Panc1 (cell line): ENCODE measurements at regions of chr17 and their contacts with region 1.

Region 1: DNA sequence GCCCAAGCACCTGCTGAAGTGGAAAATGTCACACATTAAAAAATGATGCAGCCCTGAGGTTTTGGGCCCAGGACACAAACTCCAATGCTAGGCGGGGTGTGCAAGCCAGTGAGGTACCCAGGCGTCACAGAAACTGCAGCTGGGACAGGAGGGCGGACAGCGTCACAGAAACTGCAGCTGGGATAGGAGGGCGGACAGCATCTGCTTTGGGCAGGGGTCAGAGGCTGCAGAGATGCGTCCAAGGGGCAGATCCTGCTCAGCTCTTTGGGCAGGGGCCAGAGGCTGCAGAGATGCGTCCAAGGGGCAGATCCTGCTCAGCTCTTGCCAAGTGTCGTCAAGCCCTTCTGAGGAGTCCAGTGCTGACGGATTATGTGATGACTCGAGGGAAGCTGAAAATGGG is 43.9 kb upstream of the RCVRN start:
- DNase-seq: no peak
- ATAC-seq: no peak
- H3K4me3 ChIP-seq: no peak overlapping the region
- H3K27ac ChIP-seq: no peak overlapping the region
- H3K4me1 ChIP-seq: no peaks in the 10 kb centered on the region
- H3K27me3 ChIP-seq: peaks cover 3% of the 10 kb centered on the region; the same call in 1 of the 2 replicates
- CTCF ChIP-seq: no peak

Region 2: GRCh38 chr17:9890124-9890523 is 58.8 kb before region 1 on chr17:
- CTCF ChIA-PET with region 1: no interaction called
- POLR2A ChIA-PET with region 1: no interaction called
- in situ Hi-C with region 1: no loop called
- intact Hi-C with region 1: no loop called
- DNase-seq: no peak
- ATAC-seq: no peak
- H3K4me3 ChIP-seq: no peak overlapping the region
- H3K27ac ChIP-seq: no peak overlapping the region
- H3K4me1 ChIP-seq: no peaks in the 10 kb centered on the region
- H3K27me3 ChIP-seq: no peaks in the 10 kb centered on the region; the same call in 1 of the 2 replicates
- CTCF ChIP-seq: peak; percentile 71

Region 3: GRCh38 chr17:9907883-9908581 is 40.9 kb before region 1 on chr17:
- CTCF ChIA-PET with region 1: no interaction called
- POLR2A ChIA-PET with region 1: no interaction called
- in situ Hi-C with region 1: no loop called
- intact Hi-C with region 1: no loop called
- DNase-seq: no peak
- ATAC-seq: no peak
- H3K4me3 ChIP-seq: no peak overlapping the region
- H3K27ac ChIP-seq: no peak overlapping the region
- H3K4me1 ChIP-seq: no peaks in the 10 kb centered on the region
- H3K27me3 ChIP-seq: no peaks in the 10 kb centered on the region; the same call in 1 of the 2 replicates
- CTCF ChIP-seq: no peak

Region 4: DNA sequence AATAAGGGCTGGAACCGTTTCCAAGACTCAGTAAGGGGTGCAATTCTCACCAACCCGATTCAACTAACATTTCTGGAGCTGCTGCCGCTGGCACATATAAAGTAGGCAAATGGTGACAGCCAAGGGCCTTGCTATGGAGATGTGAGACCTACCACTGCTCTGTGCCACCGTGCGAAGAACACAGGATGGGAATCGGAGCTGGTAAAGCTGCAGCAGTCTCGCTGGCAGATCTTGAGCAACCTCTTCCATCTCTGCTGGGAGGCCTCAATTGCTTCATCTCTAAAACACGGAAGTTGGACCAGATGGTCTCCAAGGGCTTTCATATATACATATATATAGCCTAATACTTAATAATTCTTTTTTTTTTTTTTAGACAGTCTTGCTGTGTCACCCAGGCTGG is 85.0 kb after region 1 on chr17:
- CTCF ChIA-PET with region 1: no interaction called
- POLR2A ChIA-PET with region 1: no interaction called
- in situ Hi-C with region 1: no loop called
- intact Hi-C with region 1: no loop called
- DNase-seq: no peak
- ATAC-seq: no peak
- H3K4me3 ChIP-seq: no peak overlapping the region
- H3K27ac ChIP-seq: no peak overlapping the region
- H3K4me1 ChIP-seq: no peaks in the 10 kb centered on the region
- H3K27me3 ChIP-seq: no peaks in the 10 kb centered on the region
- CTCF ChIP-seq: no peak

Region 5: DNA sequence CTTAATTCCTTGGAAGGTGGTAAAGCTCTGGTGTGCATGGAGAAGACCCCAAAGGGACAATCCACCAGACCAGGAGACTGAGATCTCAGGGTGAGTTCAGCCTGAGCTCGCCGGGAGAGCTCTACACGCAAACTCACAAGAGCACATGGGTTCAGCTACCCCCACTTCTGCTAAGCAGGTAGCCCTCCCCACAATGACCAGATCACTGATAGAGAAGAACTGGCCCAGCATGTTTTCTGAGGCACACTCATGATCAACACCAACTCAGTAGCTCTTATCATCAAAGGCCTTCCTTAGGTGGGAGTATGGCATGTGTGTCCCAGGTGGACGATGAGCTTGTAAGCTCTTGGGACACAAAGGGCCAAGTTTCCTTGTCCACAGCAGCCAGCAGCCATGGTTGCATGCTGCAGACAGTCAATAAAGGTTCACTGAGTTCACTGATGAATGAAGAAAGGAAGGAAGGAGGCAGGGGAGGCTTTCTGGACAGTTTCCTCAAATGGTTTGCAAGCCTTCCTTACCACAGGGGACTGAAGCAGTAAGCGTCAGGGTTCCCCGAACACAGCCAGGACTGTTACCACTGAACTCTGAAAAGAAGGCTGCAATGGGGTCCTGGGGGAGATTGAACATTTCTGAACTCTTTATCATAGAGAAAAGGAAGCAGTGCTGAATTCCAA is 138.3 kb after region 1 on chr17:
- CTCF ChIA-PET with region 1: no interaction called
- POLR2A ChIA-PET with region 1: no interaction called
- in situ Hi-C with region 1: no loop called
- intact Hi-C with region 1: no loop called
- DNase-seq: no peak
- ATAC-seq: no peak
- H3K4me3 ChIP-seq: no peak overlapping the region
- H3K27ac ChIP-seq: no peak overlapping the region
- H3K4me1 ChIP-seq: no peaks in the 10 kb centered on the region
- H3K27me3 ChIP-seq: no peaks in the 10 kb centered on the region
- CTCF ChIP-seq: no peak

Region 6: DNA sequence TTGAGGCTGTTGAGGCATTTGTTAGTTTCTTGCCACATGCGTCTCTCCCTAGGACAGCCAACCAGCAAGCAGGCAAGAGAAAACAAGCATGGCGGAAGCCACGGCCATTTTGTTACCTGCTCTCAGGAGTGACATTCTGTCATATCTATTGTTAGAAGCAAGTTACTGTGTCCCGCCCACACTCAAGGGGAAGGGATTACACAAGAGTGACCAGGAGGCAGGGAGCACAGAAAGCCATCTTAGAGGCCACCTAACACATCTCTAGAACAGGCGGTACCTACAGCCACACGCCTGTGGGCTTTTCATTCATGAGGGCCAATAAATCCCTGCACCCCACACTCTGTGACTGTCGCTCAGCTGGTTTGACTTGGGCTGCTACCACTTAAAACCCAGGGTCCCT is 152.4 kb after region 1 on chr17:
- CTCF ChIA-PET with region 1: interaction called, 16 read pairs
- POLR2A ChIA-PET with region 1: no interaction called
- in situ Hi-C with region 1: no loop called
- intact Hi-C with region 1: no loop called
- DNase-seq: no peak
- ATAC-seq: no peak
- H3K4me3 ChIP-seq: no peak overlapping the region
- H3K27ac ChIP-seq: no peak overlapping the region
- H3K4me1 ChIP-seq: no peaks in the 10 kb centered on the region
- H3K27me3 ChIP-seq: no peaks in the 10 kb centered on the region; the same call in 1 of the 2 replicates
- CTCF ChIP-seq: no peak